ENCODE measurements at regions of chr3 and their contacts with region 1.

Region 1: DNA sequence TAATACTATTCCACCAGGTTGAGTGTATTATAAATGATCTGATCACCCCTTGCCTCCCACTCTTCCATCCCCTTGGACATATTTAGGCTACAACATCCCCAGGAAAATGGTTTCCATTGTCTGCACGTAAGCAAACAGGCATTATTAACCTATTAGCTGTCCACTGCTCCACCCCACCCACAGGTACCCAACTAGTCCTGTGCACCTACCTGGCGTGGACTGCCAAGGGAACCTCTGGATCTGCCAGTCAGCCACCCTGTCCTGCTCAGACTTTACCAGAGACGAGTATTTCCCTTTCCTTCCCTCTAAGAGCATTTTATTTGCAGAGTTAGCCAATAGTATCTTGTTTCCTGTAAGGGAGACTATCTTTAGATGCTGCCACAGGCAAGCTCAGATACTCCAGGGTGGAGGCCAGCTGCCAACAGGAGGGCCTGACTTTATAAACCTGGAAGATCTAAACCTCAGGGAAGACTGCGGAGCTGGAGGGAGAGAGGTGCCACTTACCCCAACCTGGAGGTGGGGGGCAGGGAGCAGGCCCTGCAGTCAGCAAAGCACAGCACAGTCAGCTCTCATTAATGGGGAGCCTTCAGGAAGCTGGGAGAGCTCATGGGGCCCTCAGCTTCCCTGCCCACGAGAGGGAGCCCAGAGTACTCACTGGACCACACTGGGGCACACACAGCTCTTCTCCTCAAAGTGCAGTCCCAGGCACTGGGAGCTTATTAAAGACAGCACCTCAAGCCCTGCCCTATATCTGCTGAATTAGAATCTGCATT is at the start of gene CX3CR1:
- DNase-seq: no peak
- ATAC-seq: peak; percentile 69
- total RNA-seq, gene CX3CR1: 1.5 TPM

Region 2: GRCh38 chr3:39208463-39209055 is 71.4 kb before region 1 on chr3:
- intact Hi-C with region 1: loop called (anchors 5 kb)
- DNase-seq: no peak
- ATAC-seq: peak; percentile 93

Region 3: DNA sequence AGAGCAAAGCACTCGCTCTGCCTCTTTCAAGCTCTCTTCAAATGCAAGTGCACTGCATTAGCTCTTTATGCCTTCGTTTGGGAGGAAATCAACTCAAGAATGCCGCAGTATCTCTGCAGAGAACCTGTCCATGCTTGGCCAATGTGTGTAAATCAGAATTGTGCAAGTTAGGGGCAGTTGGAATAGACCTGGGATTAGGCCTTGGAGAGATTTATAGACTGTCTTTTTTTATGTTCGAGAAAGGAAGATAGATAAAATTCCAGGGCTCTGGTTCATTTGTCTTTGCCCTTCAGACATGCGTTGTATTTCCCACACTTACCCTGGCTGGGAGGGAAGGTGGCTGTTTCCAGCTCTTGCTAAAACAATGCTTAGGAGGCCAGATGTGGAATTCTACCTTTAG is 351.2 kb after region 1 on chr3:
- intact Hi-C with region 1: no loop called
- DNase-seq: no peak
- ATAC-seq: no peak